ENCODE measurements at regions of chr16 and their contacts with region 1.

Region 1: DNA sequence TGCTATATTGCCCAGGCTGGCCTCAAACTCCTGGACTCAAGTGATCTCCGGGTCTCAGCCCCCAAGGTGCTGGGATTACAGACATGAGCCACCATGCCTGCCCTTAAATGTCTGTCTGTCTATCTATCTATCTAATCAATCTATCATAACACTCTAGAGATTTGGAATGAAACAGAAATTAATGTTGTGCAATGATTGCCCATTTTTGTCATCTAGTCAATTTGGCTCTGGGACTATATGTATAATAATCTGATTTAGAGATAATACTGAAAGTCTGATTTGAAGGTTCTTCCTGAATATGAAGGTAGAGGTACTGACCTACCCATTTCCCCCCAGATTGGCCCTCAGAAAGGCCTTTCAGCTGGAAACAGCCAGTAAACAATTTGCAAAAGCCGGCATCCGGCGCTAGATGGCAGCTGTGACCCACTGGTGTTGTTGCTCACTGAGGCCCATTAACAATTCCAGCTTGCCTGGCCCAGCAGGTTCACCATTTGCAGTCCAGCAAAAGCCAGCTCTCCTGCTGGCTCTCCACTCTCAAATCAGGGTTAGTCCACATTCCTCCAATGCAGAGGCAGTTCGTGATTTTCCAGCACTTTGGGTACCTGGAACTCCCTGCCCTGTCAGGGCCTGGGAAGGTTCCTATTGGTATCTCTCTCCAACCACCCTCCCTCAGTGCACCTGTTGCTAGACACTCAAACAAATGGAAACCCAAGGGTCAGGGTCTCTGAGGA is 22.9 kb upstream of the C16orf87 start:
- DNase-seq: peak; percentile 85 to 86
- H3K4me3 ChIP-seq: no peak overlapping the region
- H3K4me3 Mint-ChIP-seq: no peak overlapping the region
- H3K27ac Mint-ChIP-seq: no peak overlapping the region
- H3K4me1 ChIP-seq: peaks cover 49% of the 10 kb centered on the region
- H3K4me1 Mint-ChIP-seq: peaks cover 50% of the 10 kb centered on the region
- H3K27me3 ChIP-seq: no peaks in the 10 kb centered on the region
- H3K27me3 Mint-ChIP-seq: no peaks in the 10 kb centered on the region
- CTCF ChIP-seq: peak; percentile 83 to 87

Region 2: DNA sequence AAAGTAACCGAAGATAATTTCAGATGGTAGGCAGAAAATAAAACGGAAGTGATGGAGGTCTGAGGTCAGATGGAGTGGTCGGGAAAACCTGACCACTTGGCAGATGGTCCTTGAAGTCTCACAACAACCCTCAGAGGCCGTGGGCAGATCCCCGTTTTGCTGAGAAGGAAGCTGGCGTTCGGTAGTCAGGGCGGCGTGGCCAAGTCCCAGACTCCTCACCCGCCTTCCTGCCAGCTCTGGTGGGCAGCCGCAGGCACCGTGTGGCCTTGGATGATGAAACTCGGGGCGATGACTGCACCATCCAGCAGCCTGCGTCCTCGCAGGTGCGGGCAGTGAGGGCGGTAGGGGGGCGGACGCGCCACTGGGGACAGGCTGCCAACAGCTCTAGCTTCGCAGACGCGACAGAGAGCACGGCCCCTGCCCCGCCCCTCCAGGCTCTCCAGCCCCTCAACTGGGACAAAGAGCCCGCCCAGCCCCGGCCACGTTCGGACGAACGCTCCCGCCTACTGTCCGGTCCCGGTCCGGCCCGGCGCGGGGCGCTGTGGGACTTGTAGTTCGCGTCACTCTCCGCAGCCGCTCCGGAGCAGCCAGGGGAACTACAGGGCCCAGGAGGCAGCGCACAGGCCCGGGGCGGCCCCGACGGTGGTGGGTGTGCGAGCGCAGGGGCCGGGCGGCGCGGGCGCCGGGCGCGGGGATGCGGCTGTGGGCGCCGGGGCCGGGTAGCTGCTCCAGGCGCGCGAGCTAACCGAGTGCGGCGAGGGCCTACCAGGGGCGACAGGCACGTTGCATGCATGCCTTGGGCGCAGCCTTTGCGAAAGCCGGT is 30.0 kb after region 1 on chr16 and contains the start of gene GPT2:
- CTCF ChIA-PET with region 1: interaction called, 22 read pairs
- POLR2A ChIA-PET with region 1: no interaction called
- intact Hi-C with region 1: no loop called
- DNase-seq: peak; percentile 97 to 99
- H3K4me3 ChIP-seq: peak within 1 kb of the TSS; percentile 95
- H3K4me3 Mint-ChIP-seq: peak within 1 kb of the TSS; percentile 94
- H3K27ac Mint-ChIP-seq: peak within 1 kb of the TSS; percentile 97
- H3K4me1 ChIP-seq: peaks cover 57% of the 10 kb centered on the region
- H3K4me1 Mint-ChIP-seq: peaks cover 44% of the 10 kb centered on the region
- H3K27me3 ChIP-seq: no peaks in the 10 kb centered on the region
- H3K27me3 Mint-ChIP-seq: no peaks in the 10 kb centered on the region
- CTCF ChIP-seq: no peak
- total RNA-seq, gene GPT2: 128 and 142 TPM in 2 replicates

Region 3: DNA sequence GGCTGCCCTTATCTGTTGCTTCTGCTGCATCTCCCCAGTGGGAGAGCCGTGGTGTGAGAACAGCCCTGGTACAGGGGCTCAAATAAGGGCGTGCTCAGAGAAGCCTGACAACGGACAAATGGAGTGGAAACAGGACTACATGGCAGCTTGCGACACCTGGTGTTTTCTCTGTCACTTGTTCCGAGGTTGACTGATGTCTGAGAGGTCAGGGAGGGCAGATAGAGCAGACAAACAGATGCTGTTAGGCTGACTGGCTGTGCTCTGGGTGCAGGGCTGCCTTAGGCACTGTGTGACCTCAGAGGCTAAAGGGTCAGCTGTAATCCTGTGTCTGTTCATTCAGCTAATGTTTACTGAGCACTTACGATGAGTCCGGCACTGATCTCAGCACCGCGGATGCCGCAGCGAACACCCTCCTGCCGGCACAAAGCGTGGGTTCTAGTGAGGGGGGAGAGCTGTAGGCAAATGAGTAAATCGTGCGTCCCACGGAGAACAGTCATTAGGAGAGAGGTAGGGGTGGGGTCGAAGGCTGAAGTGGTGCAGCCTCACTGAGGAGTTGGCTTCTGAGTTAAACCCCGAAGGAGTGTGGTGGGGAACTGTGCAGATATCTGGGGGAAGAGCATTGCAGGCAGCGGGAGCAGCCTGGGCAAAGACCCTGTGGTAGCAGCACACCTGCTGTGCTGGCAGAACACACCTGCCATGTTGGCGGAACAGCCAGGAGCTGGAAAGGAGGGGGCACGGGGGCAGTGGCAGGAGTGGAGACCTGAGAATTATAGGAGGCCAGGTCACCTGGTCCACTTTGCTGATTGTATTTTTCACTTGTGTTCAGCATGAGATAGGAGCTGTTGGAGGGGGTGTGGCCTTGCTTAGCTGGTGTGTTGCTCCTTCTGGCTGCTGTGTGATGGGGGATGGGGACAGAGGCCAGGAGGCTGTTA is 65.2 kb after region 1 on chr16:
- CTCF ChIA-PET with region 1: interaction called, 20 read pairs
- POLR2A ChIA-PET with region 1: interaction called, 3 read pairs
- intact Hi-C with region 1: loop called (anchors 2 kb)
- DNase-seq: peak; percentile 73 to 78
- H3K4me3 ChIP-seq: no peak overlapping the region
- H3K4me3 Mint-ChIP-seq: no peak overlapping the region
- H3K27ac Mint-ChIP-seq: peak overlapping the region; percentile 21
- H3K4me1 ChIP-seq: peaks cover 18% of the 10 kb centered on the region
- H3K4me1 Mint-ChIP-seq: peaks cover 32% of the 10 kb centered on the region
- H3K27me3 ChIP-seq: no peaks in the 10 kb centered on the region
- H3K27me3 Mint-ChIP-seq: no peaks in the 10 kb centered on the region
- CTCF ChIP-seq: peak in 1 of 2 experiments; percentile 41

Region 4: GRCh38 chr16:47018223-47018891 is 164.5 kb after region 1 on chr16:
- CTCF ChIA-PET with region 1: no interaction called
- POLR2A ChIA-PET with region 1: no interaction called
- intact Hi-C with region 1: loop called (anchors 5 kb)
- DNase-seq: peak; percentile 72 to 75
- H3K4me3 ChIP-seq: no peak overlapping the region
- H3K4me3 Mint-ChIP-seq: no peak overlapping the region
- H3K27ac Mint-ChIP-seq: no peak overlapping the region
- H3K4me1 ChIP-seq: no peaks in the 10 kb centered on the region
- H3K4me1 Mint-ChIP-seq: no peaks in the 10 kb centered on the region
- H3K27me3 ChIP-seq: no peaks in the 10 kb centered on the region
- H3K27me3 Mint-ChIP-seq: no peaks in the 10 kb centered on the region
- CTCF ChIP-seq: peak; percentile 45 to 75

Measured in Caco-2 (cell line).